A549 (cell line): ENCODE measurements at regions of chr19 and their contacts with region 1.

Region 1: DNA sequence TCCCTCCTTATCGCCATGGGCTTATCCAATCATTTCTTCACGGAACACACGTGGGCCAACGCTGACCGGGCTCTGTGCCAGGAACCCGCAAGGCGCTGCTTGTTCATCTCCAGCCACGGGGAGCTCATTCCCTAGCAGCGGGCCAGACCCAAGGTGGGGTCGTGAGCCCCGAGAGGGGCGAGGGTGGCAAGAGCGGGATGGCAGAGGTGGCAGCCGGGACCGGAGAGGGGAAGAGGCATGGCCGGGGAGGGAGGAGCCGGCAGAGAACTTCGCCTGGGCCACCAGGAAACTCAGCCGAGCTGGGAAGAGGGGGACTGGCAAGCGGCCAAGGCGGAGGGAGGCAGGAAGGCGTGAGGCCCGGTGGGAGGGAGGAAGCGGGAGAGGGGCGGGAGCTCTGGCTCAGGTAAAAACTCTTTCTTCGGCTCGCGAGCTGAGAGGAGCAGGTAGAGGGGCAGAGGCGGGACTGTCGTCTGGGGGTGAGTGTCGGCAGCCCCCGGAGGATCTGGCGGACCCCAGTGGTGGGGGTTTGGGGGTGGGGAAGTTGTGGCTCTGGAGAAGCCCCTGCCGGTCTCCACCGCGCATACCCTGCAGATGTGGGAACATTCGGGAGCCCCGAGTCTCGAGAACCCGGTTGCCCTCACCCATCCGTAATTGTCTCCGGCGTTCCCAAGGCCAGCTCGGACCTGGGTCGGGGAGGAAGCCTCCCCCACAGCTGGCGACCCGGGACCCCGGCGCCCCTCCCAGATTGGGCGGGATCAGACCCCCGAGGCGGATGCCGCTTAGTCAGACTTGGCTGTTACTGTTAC is at the start of gene B3GNT3:
- DNase-seq: peak; percentile 47 to 72
- ATAC-seq: peak; percentile 60 to 65
- H3K4me3 ChIP-seq: peak within 1 kb of the TSS; percentile 50
- H3K27ac ChIP-seq: peak within 1 kb of the TSS; percentile 85 to 91
- H3K4me1 ChIP-seq: peaks cover 52% of the 10 kb centered on the region
- CTCF ChIP-seq: no peak
- EP300 ChIP-seq: no peak
- POLR2A ChIP-seq: no peak
- RAD21 ChIP-seq: no peak
- polyA plus RNA-seq, gene B3GNT3: 2.7 and 4.8 TPM in 2 replicates

Region 2: GRCh38 chr19:17706750-17707181 is 88.2 kb before region 1 on chr19:
- CTCF ChIA-PET with region 1: no interaction called
- POLR2A ChIA-PET with region 1: no interaction called
- DNase-seq: peak in 1 of 2 experiments; percentile 43
- ATAC-seq: peak in 1 of 2 experiments; percentile 57; a peak in 3 of 6 replicates
- H3K4me3 ChIP-seq: no peak overlapping the region
- H3K27ac ChIP-seq: no peak overlapping the region
- H3K4me1 ChIP-seq: no peaks in the 10 kb centered on the region
- CTCF ChIP-seq: no peak
- EP300 ChIP-seq: no peak
- POLR2A ChIP-seq: no peak
- RAD21 ChIP-seq: no peak

Region 3: GRCh38 chr19:17784201-17785008 is 10.5 kb before region 1 on chr19:
- CTCF ChIA-PET with region 1: interaction called, 19 read pairs
- POLR2A ChIA-PET with region 1: no interaction called
- DNase-seq: peak; percentile 70 to 76
- ATAC-seq: peak; percentile 42 to 70
- H3K4me3 ChIP-seq: no peak overlapping the region
- H3K27ac ChIP-seq: 0 out of 6 replicates have a peak overlapping the region, but pooled peaks of 1 of the 2 experiments have one; percentile 41
- H3K4me1 ChIP-seq: peaks cover 4% of the 10 kb centered on the region; the same call in 1 of the 3 replicates
- CTCF ChIP-seq: peak; percentile 64
- EP300 ChIP-seq: no peak
- POLR2A ChIP-seq: no peak
- RAD21 ChIP-seq: peak; percentile 55 to 58

Region 4: GRCh38 chr19:17902701-17903100 is 107.8 kb after region 1 on chr19:
- CTCF ChIA-PET with region 1: no interaction called
- POLR2A ChIA-PET with region 1: no interaction called
- DNase-seq: no peak
- ATAC-seq: no peak
- H3K4me3 ChIP-seq: no peak overlapping the region
- H3K27ac ChIP-seq: peak overlapping the region in 1 of 2 experiments; percentile 1; a peak in 1 of 6 replicates
- H3K4me1 ChIP-seq: 0 out of 3 replicates have a peak, but pooled peaks cover 5% of the 10 kb centered on the region
- CTCF ChIP-seq: no peak
- EP300 ChIP-seq: no peak
- POLR2A ChIP-seq: no peak
- RAD21 ChIP-seq: no peak